Activated T-helper 2 cell treated with anti-CD3 and anti-CD28 coated beads, Interferon-gamma antibody, Interleukin-2, Interleukin-4, amounts not matched to agents 10 μg/mL and 5 μg/mL and 100 μg/mL, durations not matched to agents 14 hours and 24 hours and 36 hours (primary cell): ENCODE measurements at regions of chr17 and their contacts with region 1.

Region 1: DNA sequence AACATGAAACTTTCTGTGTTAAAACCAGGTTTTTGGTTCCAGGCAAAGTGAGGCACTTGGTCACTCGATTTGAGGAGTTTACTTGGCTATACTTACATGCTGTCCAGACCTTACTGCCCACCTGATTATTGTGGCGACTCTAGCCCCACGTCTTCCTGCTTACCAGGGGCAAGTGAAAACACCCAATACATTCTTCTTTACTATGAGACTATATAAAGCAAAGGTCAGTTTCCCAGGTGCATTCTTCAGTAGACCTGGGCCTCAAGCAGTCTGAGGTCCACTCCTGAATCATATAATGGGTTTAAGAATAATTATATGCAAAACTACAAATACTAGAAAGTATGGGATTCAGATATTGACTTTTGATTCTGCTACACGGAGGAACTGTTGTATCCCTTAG is 86.2 kb downstream of the EFCAB5 start:
- DNase-seq: no peak
- H3K4me3 Mint-ChIP-seq: no peak overlapping the region
- H3K27ac Mint-ChIP-seq: no peak overlapping the region
- H3K4me1 Mint-ChIP-seq: no peaks in the 10 kb centered on the region
- H3K27me3 Mint-ChIP-seq: peaks cover 5% of the 10 kb centered on the region

Region 2: DNA sequence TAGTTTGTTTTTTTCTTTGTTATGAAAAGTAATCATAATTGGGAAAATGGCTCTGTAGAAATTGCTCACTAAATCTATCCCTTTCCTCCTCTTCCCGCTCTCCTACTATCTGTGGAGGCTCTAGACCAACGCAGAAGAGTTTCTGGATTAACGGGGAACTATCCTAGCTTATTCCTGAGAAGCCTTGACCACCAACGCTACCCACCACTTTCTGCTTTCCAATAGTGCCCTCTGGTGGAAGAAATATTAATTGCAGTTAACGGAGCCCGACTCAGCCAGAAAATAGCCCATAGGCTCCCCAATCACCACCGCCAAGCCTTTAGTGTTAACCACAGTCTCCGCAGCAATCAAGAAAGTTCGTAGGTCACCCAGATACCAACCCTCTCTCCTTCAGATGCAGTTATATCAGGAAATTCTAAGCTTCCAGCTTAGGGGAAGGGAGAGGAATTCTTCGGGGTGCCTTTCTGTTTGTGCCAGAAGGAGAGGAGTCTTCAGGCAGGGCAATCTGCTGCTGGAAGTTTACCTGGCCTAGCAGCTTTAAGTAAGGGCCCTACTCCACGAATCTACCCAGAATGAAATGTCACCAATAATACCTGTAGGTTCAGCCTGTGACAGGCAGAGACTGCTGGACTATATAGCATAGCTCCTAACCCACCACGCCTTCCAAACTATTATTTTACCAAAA is 65.9 kb after region 1 on chr17:
- intact Hi-C with region 1: loop called (anchors 2 kb)
- DNase-seq: peak; percentile 20
- H3K4me3 Mint-ChIP-seq: no peak overlapping the region
- H3K27ac Mint-ChIP-seq: no peak overlapping the region
- H3K4me1 Mint-ChIP-seq: peaks cover 7% of the 10 kb centered on the region
- H3K27me3 Mint-ChIP-seq: peaks cover 45% of the 10 kb centered on the region

Region 3: DNA sequence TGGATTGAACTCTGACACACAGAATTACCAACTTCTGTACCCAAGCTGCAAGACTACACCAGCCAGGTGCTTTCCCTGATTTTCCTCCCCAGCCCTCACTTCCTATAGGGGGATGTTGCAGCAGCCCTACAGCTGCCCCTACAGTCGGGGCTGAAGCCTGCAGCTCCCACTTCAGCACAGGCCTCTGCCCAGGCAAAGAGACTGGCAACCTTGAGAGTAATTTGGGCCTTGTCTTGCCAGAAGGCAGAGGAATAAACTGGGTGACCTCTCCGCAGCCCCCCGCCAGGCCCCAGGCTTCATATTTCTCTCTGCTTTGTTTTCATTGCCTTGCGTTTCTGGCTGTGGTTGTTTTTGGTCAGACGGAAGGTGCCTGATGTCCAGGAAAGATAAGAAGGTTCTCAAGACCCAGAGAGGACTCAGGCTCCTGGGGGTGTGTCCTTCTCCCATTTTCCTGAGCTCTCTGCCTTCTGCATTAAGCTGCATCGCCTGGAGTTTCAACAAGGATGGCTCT is 175.8 kb after region 1 on chr17:
- intact Hi-C with region 1: no loop called
- DNase-seq: no peak
- H3K4me3 Mint-ChIP-seq: no peak overlapping the region
- H3K27ac Mint-ChIP-seq: no peak overlapping the region
- H3K4me1 Mint-ChIP-seq: peaks cover 5% of the 10 kb centered on the region
- H3K27me3 Mint-ChIP-seq: peaks cover 14% of the 10 kb centered on the region

Region 4: DNA sequence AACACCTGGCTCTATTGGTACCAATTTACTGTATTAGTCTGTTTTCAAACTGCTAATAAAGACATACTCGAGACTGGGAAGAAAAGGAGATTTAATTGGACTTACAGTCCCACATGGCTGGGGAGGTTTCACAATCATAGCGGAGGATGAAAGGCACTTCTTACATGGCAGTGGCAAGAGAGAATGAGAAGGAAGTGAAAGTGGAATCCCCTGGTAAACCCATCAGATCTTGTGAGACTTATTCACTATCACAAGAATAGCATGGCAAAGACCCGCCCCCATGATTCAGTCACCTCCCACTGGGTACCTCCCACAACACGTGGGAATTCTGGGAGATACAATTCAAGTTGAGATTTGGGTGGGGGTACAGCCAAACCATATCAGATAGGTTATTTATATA is 427.0 kb after region 1 on chr17:
- intact Hi-C with region 1: no loop called
- DNase-seq: no peak
- H3K4me3 Mint-ChIP-seq: no peak overlapping the region
- H3K27ac Mint-ChIP-seq: no peak overlapping the region
- H3K4me1 Mint-ChIP-seq: no peaks in the 10 kb centered on the region
- H3K27me3 Mint-ChIP-seq: no peaks in the 10 kb centered on the region